Spleen (tissue), 13 donors: ENCODE measurements at regions of chr13 and their contacts with region 1.

Region 1: DNA sequence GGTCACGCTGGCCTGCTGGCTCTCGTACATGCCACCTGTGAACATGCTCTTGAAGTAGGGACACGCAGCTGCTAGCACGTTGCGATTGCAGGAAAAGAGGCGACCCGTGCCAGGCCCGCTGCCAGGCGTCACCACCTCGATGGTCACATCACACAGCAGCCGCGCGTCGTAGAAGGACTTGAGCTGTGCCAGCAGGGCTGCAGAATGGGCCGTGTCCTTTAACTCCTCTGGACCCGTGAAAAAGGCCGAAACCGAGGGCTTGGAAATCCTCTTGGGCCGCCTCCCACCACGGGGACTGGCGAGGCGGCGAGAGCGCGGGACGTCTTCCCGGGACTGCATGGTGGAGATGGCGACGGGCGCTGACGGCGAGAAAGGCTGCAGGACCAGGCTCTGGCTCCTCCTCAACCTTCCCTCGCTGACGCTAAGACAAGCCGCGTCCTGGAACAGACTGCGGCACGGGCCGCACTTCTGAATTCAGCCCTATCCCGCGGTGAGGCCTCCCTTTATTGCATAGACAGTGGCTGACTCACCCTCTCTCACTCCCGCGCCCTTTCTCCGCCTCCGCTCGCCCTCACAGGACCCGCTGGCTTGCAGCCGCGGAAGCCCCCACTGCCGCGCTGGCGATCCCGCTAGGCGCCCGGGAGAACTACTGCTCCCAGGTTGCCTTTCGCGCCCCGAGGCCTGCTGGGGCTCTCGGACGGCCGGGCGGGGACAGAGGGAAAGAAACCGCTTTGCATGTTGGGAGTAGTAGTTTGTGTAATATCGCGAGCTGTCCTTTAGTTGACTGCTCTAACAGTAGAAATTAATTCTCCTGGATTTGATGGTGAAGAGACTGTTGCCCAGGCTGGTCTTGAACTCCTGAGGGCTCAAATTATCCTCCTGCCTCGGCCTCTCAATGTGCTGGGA is at the start of gene KBTBD7:
- DNase-seq: peak; percentile 99
- H3K4me3 ChIP-seq: peak within 1 kb of the TSS; percentile 56 to 93 (median 70)
- H3K27ac ChIP-seq: peak within 1 kb of the TSS; percentile 75 to 94 (median 89)
- H3K4me1 ChIP-seq: peaks cover 5 to 61% (median 28%) of the 10 kb centered on the region in 6 donors
- H3K27me3 ChIP-seq: no peaks in the 10 kb centered on the region
- CTCF ChIP-seq: peak in 5 of 11 experiments; percentile 16 to 41 (median 32)
- POLR2A ChIP-seq: peak in 1 of 3 donors; percentile 41
- total RNA-seq, gene KBTBD7: 6.9 to 14.9 (median 11.1) TPM

Region 2: DNA sequence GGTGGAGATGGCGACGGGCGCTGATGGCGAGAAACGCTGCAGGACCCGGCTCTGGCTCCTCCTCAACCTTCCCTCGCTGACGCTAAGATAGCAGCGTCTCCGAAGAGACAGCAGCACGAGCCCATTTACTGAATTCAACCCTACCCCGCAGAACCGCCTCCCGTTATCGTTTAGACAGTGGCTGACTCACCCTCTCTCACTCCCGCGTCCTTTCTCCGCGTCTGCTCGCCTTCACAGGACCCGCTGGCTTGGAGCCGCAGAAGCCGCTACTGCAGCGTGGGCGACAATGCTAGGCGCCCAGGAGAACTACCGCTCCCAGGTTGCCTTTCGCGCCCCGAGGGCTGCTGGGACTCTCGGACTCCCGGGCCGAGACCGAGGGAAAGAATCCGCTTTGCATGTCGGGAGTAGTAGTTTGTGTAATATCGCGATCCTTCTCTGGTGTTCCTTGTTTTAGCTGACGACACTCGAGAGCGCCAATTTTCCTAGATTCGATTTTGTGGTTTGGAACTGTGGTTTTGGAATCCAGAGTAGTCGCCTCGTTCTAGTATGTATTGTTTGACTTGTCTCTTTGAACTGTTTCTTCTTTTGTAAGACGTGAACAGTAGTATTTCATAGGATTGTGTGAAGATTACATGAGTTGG is 61.5 kb before region 1 on chr13 and contains the start of gene KBTBD6:
- intact Hi-C with region 1: loop called (anchors 5 kb)
- DNase-seq: peak; percentile 99
- H3K4me3 ChIP-seq: peak within 1 kb of the TSS; percentile 69 to 94 (median 80)
- H3K27ac ChIP-seq: peak within 1 kb of the TSS; percentile 73 to 91 (median 87)
- H3K4me1 ChIP-seq: peaks cover 19 to 59% (median 49%) of the 10 kb centered on the region in 6 donors
- H3K27me3 ChIP-seq: no peaks in the 10 kb centered on the region
- CTCF ChIP-seq: peak in 3 of 11 experiments; percentile 9 to 42 (median 23)
- POLR2A ChIP-seq: peak in 1 of 3 donors; percentile 10
- total RNA-seq, gene KBTBD6: 5.0 to 10.0 (median 6.0) TPM